Caco-2 (cell line): ENCODE measurements at regions of chr12 and their contacts with region 1.

Region 1: GRCh38 chr12:48716493-48717251 is at the start of gene CCNT1:
- DNase-seq: peak; percentile 100
- H3K4me3 ChIP-seq: peak within 1 kb of the TSS; percentile 66
- H3K4me3 Mint-ChIP-seq: peak within 1 kb of the TSS; percentile 88
- H3K27ac Mint-ChIP-seq: peak within 1 kb of the TSS; percentile 98
- H3K4me1 ChIP-seq: peaks cover 10% of the 10 kb centered on the region; the same call in 1 of the 2 replicates
- H3K4me1 Mint-ChIP-seq: no peaks in the 10 kb centered on the region
- H3K27me3 ChIP-seq: no peaks in the 10 kb centered on the region
- H3K27me3 Mint-ChIP-seq: no peaks in the 10 kb centered on the region
- CTCF ChIP-seq: peak in 1 of 2 experiments; percentile 44
- total RNA-seq, gene CCNT1: 52.1 and 53.1 TPM in 2 replicates

Region 2: DNA sequence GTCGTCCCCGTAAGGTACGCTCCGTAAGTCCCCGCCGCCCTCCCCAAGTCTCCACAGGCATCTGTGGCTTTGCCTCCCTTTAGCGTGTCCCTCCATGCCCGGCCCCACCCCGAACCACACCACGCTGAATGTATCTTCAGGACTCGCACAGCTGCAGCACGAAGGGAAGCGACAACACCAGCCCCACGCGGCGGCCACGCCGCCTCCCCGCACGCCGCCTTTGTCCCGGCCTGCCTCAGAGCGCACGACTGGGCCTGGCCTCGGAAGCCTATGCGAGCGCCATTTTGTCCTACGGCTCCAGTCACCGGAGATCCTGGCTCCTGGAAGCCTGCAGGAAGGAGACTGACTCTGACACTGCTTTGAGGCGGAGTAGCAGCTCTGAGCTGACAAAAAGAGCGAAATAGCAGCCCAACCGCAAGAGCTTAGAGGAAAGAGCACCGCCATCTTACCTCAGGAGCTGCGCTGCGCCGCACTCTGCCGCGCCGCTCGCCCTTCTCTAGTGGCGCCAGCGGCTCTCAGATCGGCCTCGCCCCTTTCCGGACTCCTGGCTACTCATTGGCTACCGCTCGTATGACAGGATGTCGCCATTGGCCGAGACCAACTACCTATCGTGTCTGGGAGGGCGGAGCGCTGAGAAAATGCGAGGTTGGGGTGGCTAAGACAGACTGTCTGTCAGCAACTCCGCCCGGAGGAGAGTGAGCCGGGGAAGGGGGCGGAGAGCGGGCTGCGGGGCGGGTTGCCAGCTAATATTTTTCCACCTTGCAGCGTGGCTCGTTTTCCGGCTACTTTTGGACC is 34.7 kb before region 1 on chr12 and contains the start of gene KANSL2:
- CTCF ChIA-PET with region 1: no interaction called
- POLR2A ChIA-PET with region 1: no interaction called
- intact Hi-C with region 1: loop called (anchors 1 kb)
- DNase-seq: peak; percentile 99
- H3K4me3 ChIP-seq: peak within 1 kb of the TSS; percentile 83
- H3K4me3 Mint-ChIP-seq: peak within 1 kb of the TSS; percentile 92
- H3K27ac Mint-ChIP-seq: peak within 1 kb of the TSS; percentile 93
- H3K4me1 ChIP-seq: peaks cover 24% of the 10 kb centered on the region; the same call in 1 of the 2 replicates
- H3K4me1 Mint-ChIP-seq: peaks cover 14% of the 10 kb centered on the region
- H3K27me3 ChIP-seq: no peaks in the 10 kb centered on the region
- H3K27me3 Mint-ChIP-seq: no peaks in the 10 kb centered on the region
- CTCF ChIP-seq: no peak
- total RNA-seq, gene KANSL2: 59.7 and 67.2 TPM in 2 replicates

Region 3: GRCh38 chr12:48739618-48740273 is 23.1 kb after region 1 on chr12:
- CTCF ChIA-PET with region 1: no interaction called
- POLR2A ChIA-PET with region 1: no interaction called
- intact Hi-C with region 1: no loop called
- DNase-seq: no peak
- H3K4me3 ChIP-seq: no peak overlapping the region
- H3K4me3 Mint-ChIP-seq: no peak overlapping the region
- H3K27ac Mint-ChIP-seq: no peak overlapping the region
- H3K4me1 ChIP-seq: no peaks in the 10 kb centered on the region
- H3K4me1 Mint-ChIP-seq: no peaks in the 10 kb centered on the region
- H3K27me3 ChIP-seq: no peaks in the 10 kb centered on the region
- H3K27me3 Mint-ChIP-seq: peaks cover 4% of the 10 kb centered on the region
- CTCF ChIP-seq: no peak

Region 4: GRCh38 chr12:49264738-49265515 is 548.3 kb after region 1 on chr12 and contains the start of gene TUBA1C:
- CTCF ChIA-PET with region 1: no interaction called
- POLR2A ChIA-PET with region 1: no interaction called
- intact Hi-C with region 1: loop called (anchors 10 kb)
- DNase-seq: peak; percentile 97 to 99
- H3K4me3 ChIP-seq: peak within 1 kb of the TSS; percentile 79
- H3K4me3 Mint-ChIP-seq: peak within 1 kb of the TSS; percentile 86
- H3K27ac Mint-ChIP-seq: peak within 1 kb of the TSS; percentile 89
- H3K4me1 ChIP-seq: peaks cover 30% of the 10 kb centered on the region
- H3K4me1 Mint-ChIP-seq: peaks cover 22% of the 10 kb centered on the region
- H3K27me3 ChIP-seq: no peaks in the 10 kb centered on the region
- H3K27me3 Mint-ChIP-seq: no peaks in the 10 kb centered on the region
- CTCF ChIP-seq: no peak
- total RNA-seq, gene TUBA1C: 636 and 638 TPM in 2 replicates